ENCODE measurements at regions of chr16 and their contacts with region 1.

Region 1: DNA sequence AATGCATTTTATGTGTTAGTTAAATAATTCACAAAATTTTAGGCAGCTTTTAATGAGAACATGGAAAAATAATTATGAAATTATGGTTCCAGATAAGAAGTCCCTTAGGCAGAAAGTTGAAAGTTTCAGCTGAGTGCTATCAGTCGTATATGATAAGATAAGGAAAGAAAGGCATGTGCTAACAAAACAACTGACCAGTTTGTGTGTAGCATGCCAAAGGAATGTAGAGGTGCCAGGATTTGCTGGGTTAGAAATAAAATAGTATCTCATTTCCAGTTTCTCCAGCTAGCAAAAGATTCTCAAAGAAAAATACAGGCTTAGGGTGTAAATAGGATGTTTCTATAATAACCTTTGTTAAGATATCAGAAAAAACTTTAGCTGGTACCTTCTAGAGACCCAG is 1044.5 kb upstream of the CDH8 start:
- DNase-seq: no peak
- ATAC-seq: no peak
- H3K4me3 ChIP-seq: no peak overlapping the region
- H3K27ac ChIP-seq: no peak overlapping the region
- H3K4me1 ChIP-seq: no peaks in the 10 kb centered on the region
- H3K27me3 ChIP-seq: no peaks in the 10 kb centered on the region
- CTCF ChIP-seq: no peak
- POLR2A ChIP-seq: no peak
- RAD21 ChIP-seq: no peak

Region 2: DNA sequence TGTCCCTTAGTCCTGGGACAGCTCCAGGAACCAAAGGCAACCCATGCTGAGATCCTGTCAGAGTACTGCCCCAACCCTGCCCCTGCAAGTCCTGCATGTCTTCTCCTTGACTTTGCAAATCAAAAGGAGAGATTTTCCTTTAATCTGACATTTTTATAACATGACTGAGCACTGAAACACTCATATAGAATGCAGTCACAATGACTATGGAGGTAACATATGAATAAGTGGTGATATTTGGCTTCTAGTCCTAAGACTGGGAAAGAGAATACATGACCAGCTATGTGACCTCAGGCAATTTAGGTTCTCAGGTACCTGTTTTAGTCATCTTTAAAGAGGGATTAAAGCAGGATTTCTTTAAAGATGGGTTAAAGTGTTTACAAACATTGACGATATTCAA is 102.9 kb before region 1 on chr16:
- CTCF ChIA-PET with region 1: no interaction called
- POLR2A ChIA-PET with region 1: no interaction called
- dilution Hi-C with region 1: no loop called
- in situ Hi-C with region 1: no loop called
- intact Hi-C with region 1: no loop called
- DNase-seq: no peak
- ATAC-seq: no peak
- H3K4me3 ChIP-seq: no peak overlapping the region
- H3K27ac ChIP-seq: no peak overlapping the region
- H3K4me1 ChIP-seq: no peaks in the 10 kb centered on the region
- H3K27me3 ChIP-seq: no peaks in the 10 kb centered on the region
- CTCF ChIP-seq: no peak
- POLR2A ChIP-seq: no peak
- RAD21 ChIP-seq: no peak

Region 3: DNA sequence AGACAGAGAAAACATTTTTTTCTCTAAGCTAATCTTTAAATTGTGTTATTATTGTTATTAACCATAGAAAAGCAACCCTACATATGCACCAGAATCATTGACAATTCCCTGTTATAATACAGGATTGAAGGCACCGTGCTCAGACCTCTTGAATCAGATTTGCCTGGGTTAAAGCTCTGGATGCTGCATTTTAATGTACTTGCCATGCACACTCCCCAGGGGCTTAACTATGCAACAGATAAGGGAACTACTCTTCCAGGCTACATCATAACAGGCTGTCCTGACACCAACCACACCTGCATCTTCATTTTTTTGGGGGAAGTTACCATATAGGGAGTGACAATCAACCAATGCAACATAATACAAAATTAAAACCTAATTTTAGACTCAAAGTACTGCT is 143.1 kb after region 1 on chr16:
- CTCF ChIA-PET with region 1: no interaction called
- POLR2A ChIA-PET with region 1: no interaction called
- dilution Hi-C with region 1: no loop called
- in situ Hi-C with region 1: no loop called
- intact Hi-C with region 1: no loop called
- DNase-seq: no peak
- ATAC-seq: no peak
- H3K4me3 ChIP-seq: no peak overlapping the region
- H3K27ac ChIP-seq: no peak overlapping the region
- H3K4me1 ChIP-seq: no peaks in the 10 kb centered on the region
- H3K27me3 ChIP-seq: no peaks in the 10 kb centered on the region
- CTCF ChIP-seq: no peak
- POLR2A ChIP-seq: no peak
- RAD21 ChIP-seq: no peak

Region 4: GRCh38 chr16:64121473-64121872 is 1040.7 kb after region 1 on chr16:
- CTCF ChIA-PET with region 1: interaction called, 10 read pairs
- POLR2A ChIA-PET with region 1: no interaction called
- dilution Hi-C with region 1: no loop called
- in situ Hi-C with region 1: no loop called
- intact Hi-C with region 1: no loop called
- DNase-seq: peak; percentile 64
- ATAC-seq: no peak
- H3K4me3 ChIP-seq: no peak overlapping the region
- H3K27ac ChIP-seq: no peak overlapping the region
- H3K4me1 ChIP-seq: no peaks in the 10 kb centered on the region
- H3K27me3 ChIP-seq: no peaks in the 10 kb centered on the region
- CTCF ChIP-seq: no peak
- POLR2A ChIP-seq: no peak
- RAD21 ChIP-seq: no peak

Measured in IMR-90 (cell line).